Gastrocnemius medialis (tissue), 4 donors: ENCODE measurements at regions of chr6 and their contacts with region 1.

Region 1: GRCh38 chr6:33711140-33712129 is at the start of gene UQCC2:
- DNase-seq: peak; percentile 96
- ATAC-seq: peak; percentile 89 to 93
- H3K4me3 ChIP-seq: peak within 1 kb of the TSS; percentile 85 to 100 (median 92)
- H3K27ac ChIP-seq: peak within 1 kb of the TSS; percentile 96 to 100 (median 97)
- H3K4me1 ChIP-seq: peaks cover 20 to 30% of the 10 kb centered on the region in 2 donors
- H3K27me3 ChIP-seq: no peaks in the 10 kb centered on the region
- CTCF ChIP-seq: peak; percentile 62 to 83 (median 64)
- POLR2A ChIP-seq: peak; percentile 87 to 88
- total RNA-seq, gene UQCC2: 50.7 to 101 (median 63.5) TPM

Region 2: GRCh38 chr6:33599413-33599911 is 112.0 kb before region 1 on chr6:
- in situ Hi-C with region 1: no loop called
- intact Hi-C with region 1: no loop called
- DNase-seq: no peak
- ATAC-seq: peak; percentile 21 to 38
- H3K4me3 ChIP-seq: no peak overlapping the region
- H3K27ac ChIP-seq: peak overlapping the region in 1 of 4 donors; percentile 65
- H3K4me1 ChIP-seq: peaks cover 0 to 22% of the 10 kb centered on the region in 2 donors
- H3K27me3 ChIP-seq: no peaks in the 10 kb centered on the region
- CTCF ChIP-seq: no peak
- POLR2A ChIP-seq: no peak

Region 3: DNA sequence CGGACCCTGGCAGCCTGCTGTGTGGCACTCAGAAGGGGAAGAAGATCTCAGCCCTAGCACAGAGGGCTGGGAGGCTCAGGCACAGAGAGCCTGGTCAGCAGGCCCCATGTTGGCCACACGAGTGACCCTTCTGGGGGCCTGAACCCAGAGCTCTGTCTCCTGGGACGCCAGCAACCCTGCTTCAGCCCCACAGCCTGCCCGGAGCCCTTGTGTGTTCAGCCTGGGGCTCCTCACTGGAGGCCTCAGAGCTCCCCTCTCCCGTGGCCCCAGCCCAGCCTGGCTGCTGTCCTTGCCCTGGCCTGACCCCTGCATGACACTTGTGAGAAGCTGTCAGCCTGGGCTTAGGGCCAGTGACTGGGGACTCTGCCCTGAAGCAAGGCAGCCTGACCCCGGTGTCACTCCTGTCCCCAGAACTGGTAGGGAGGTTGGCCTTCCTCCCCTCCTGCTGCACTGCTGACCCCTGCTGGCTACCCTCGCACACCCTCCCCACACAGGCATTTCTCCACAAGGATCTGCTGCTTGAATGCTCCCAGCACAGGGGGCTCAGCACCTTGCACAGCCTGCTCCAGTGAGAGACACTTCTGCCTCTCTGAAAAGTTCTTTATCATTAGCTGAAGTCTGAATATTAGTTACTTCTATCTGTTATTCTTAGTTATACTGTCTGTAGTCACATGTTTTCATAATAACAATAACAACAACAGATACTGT is 50.6 kb after region 1 on chr6:
- in situ Hi-C with region 1: loop called in 2 of 4 experiments (anchors 5 kb)
- intact Hi-C with region 1: loop called (anchors 1 kb)
- DNase-seq: peak; percentile 84 to 98
- ATAC-seq: peak; percentile 91 to 95
- H3K4me3 ChIP-seq: peak overlapping the region in 3 of 4 donors; percentile 27 to 37 (median 34)
- H3K27ac ChIP-seq: peak overlapping the region; percentile 85 to 93 (median 90)
- H3K4me1 ChIP-seq: peaks cover 24 to 26% of the 10 kb centered on the region in 2 donors
- H3K27me3 ChIP-seq: no peaks in the 10 kb centered on the region
- CTCF ChIP-seq: peak; percentile 73 to 85 (median 85)
- POLR2A ChIP-seq: peak; percentile 31 to 46